Prostate gland (tissue), 2 donors: ENCODE measurements at regions of chr1 and their contacts with region 1.

Region 1: GRCh38 chr1:29124366-29125236 is 898 bp upstream of the TMEM200B start:
- DNase-seq: no peak
- H3K4me3 ChIP-seq: peak overlapping the region; percentile 50 to 52
- H3K27ac ChIP-seq: peak overlapping the region; percentile 83 to 90
- H3K4me1 ChIP-seq: peaks cover 3% of the 10 kb centered on the region
- H3K27me3 ChIP-seq: no peaks in the 10 kb centered on the region
- CTCF ChIP-seq: peak; percentile 38 to 85 (median 68)
- POLR2A ChIP-seq: peak; percentile 29

Region 2: DNA sequence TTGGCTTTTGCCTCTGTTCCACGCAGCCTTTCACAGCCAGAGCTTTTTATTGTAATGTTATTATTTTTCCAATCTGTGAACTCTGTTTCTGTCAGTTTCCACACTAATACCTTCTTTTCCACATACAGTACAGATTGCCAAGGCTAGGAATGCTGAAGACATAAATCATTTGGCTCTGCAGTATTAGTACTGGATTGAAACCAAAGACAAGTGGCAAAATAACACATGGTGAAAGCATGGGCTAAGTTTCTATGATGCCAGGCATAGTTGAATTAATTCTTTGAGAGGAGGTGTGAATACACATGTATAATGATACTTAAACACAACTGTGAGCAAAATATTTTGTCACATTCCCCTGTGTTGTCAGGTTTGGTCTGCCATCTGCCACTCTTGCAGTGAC is 74.4 kb before region 1 on chr1:
- intact Hi-C with region 1: loop called (anchors 5 kb)
- DNase-seq: no peak
- H3K4me3 ChIP-seq: no peak overlapping the region
- H3K27ac ChIP-seq: no peak overlapping the region
- H3K4me1 ChIP-seq: no peaks in the 10 kb centered on the region
- H3K27me3 ChIP-seq: no peaks in the 10 kb centered on the region
- CTCF ChIP-seq: no peak
- POLR2A ChIP-seq: no peak

Region 3: DNA sequence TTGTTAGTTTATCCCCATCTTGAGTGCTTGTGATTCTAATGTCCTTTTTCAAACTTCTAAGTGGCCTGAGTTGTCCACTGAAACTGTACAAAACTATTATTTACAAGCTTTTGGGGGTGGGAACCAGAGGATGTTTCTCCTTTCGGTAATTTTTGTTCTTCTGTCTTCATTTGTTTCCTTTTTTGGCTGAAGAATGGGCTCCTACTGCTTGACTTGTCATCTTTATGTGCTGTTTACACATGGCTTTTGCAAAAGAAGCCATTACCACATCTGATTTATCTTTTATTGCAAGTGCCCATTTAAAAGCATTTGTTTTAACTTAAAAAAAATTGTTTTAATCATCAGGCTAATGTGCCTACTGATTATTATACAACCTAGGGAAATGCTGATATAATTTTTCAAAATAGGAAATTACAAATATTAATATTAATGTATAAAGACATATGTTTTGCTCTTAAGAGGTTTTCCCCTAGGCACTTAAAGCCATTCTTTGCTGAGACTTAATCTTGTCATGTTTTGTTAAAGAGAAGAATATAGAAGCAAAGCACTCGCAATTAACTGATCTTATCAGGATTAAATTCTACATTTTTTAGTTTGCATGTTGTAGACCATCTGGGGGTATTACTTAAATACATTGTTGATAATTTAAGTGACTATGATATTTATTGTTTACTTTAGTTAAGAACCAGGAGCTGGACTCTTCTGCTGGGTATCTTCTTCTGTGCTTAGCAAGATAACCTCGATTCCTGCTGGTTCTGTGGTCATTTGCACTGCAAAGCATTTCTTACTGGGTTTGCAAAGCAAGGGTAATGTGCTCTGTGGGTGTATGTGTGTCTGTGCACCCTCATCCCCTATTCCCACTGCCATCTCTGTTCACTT is 41.0 kb before region 1 on chr1:
- intact Hi-C with region 1: loop called (anchors 2 kb)
- DNase-seq: no peak
- H3K4me3 ChIP-seq: no peak overlapping the region
- H3K27ac ChIP-seq: peak overlapping the region; percentile 52 to 56
- H3K4me1 ChIP-seq: no peaks in the 10 kb centered on the region
- H3K27me3 ChIP-seq: no peaks in the 10 kb centered on the region
- CTCF ChIP-seq: no peak
- POLR2A ChIP-seq: no peak

Region 4: GRCh38 chr1:29181413-29182225 is 57.0 kb after region 1 on chr1 and contains the start of gene SRSF4:
- intact Hi-C with region 1: loop called (anchors 2 kb)
- DNase-seq: peak; percentile 98
- H3K4me3 ChIP-seq: peak within 1 kb of the TSS; percentile 97 to 98
- H3K27ac ChIP-seq: peak within 1 kb of the TSS; percentile 100
- H3K4me1 ChIP-seq: no peaks in the 10 kb centered on the region
- H3K27me3 ChIP-seq: no peaks in the 10 kb centered on the region
- CTCF ChIP-seq: peak; percentile 80 to 96 (median 88)
- POLR2A ChIP-seq: peak; percentile 88
- total RNA-seq, gene SRSF4: 55.2 to 65.7 TPM

Region 5: GRCh38 chr1:29202584-29203340 is 78.2 kb after region 1 on chr1:
- intact Hi-C with region 1: loop called (anchors 5 kb)
- DNase-seq: peak; percentile 97
- H3K4me3 ChIP-seq: no peak overlapping the region
- H3K27ac ChIP-seq: peak overlapping the region; percentile 55 to 75
- H3K4me1 ChIP-seq: no peaks in the 10 kb centered on the region
- H3K27me3 ChIP-seq: no peaks in the 10 kb centered on the region
- CTCF ChIP-seq: peak; percentile 96 to 98 (median 98)
- POLR2A ChIP-seq: no peak